Left lung (tissue), 14 donors: ENCODE measurements at regions of chr17 and their contacts with region 1.

Region 1: DNA sequence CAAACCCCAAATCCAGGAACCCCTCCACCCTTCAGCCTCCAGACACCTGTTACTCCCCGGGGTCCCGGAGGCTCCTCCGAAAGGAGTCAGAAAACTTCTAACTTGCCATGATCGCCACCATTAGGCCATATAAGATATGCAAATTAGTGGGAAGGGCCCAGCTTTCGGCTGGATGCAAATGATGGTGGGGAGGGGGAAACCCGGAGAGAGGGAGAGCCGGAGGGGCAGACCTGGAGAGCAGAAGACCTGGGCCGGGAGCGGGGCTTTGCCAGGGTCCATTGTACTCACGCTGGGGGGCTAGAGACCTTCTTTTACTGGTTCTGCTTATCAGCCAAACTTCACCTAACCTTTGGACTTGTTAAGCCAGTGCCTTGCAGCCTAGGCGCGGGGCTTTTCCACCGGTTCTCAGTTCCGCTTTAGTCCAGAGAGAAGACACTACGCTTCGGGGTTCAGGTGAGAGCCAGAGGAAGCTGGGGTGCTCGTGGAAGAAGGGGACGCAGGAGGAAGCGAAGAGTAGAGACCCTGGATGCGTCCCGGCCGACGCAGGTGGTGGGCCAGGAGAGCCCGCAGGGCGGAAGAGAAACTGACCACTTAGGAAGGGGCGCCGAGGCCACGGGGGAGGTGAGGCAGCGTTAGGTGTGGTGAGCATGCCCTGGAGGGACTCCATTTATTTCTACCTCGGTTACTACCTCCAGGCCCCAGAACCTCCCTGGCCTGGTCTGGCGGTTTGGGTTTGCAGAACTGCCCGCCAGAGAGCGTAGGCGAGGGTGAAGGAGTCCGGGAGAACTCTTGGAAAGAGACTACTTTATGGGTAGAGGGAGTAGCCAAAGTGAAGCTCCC is at the start of gene HNF1B:
- DNase-seq: peak in 3 of 4 donors; percentile 66 to 75 (median 70)
- ATAC-seq: peak; percentile 81
- H3K4me3 ChIP-seq: peak within 1 kb of the TSS; percentile 30 to 33
- H3K27ac ChIP-seq: peak within 1 kb of the TSS; percentile 68 to 76
- H3K4me1 ChIP-seq: peaks cover 4 to 42% of the 10 kb centered on the region in 2 donors
- H3K27me3 ChIP-seq: peaks cover 61 to 98% of the 10 kb centered on the region in 2 donors
- CTCF ChIP-seq: no peak
- polyA plus RNA-seq, gene HNF1B: 31.0 to 40.6 (median 36.2) TPM

Region 2: GRCh38 chr17:37592291-37592690 is 152.9 kb before region 1 on chr17:
- intact Hi-C with region 1: no loop called
- DNase-seq: no peak
- ATAC-seq: no peak
- H3K4me3 ChIP-seq: no peak overlapping the region
- H3K27ac ChIP-seq: no peak overlapping the region
- H3K4me1 ChIP-seq: peaks cover 0 to 6% of the 10 kb centered on the region in 2 donors
- H3K27me3 ChIP-seq: no peaks in the 10 kb centered on the region
- CTCF ChIP-seq: no peak

Region 3: GRCh38 chr17:37701496-37701898 is 43.7 kb before region 1 on chr17:
- intact Hi-C with region 1: no loop called
- DNase-seq: no peak
- ATAC-seq: peak; percentile 89
- H3K4me3 ChIP-seq: no peak overlapping the region
- H3K27ac ChIP-seq: no peak overlapping the region
- H3K4me1 ChIP-seq: no peaks in the 10 kb centered on the region
- H3K27me3 ChIP-seq: peaks cover 0 to 16% of the 10 kb centered on the region in 2 donors
- CTCF ChIP-seq: peak; percentile 39 to 68

Region 4: GRCh38 chr17:37725601-37726146 is 19.5 kb before region 1 on chr17:
- intact Hi-C with region 1: loop called in 1 of 2 experiments (anchors 2 kb)
- DNase-seq: no peak
- ATAC-seq: peak; percentile 72
- H3K4me3 ChIP-seq: no peak overlapping the region
- H3K27ac ChIP-seq: peak overlapping the region in 1 of 2 donors; percentile 33
- H3K4me1 ChIP-seq: no peaks in the 10 kb centered on the region
- H3K27me3 ChIP-seq: peaks cover 0 to 10% of the 10 kb centered on the region in 2 donors
- CTCF ChIP-seq: no peak

Region 5: DNA sequence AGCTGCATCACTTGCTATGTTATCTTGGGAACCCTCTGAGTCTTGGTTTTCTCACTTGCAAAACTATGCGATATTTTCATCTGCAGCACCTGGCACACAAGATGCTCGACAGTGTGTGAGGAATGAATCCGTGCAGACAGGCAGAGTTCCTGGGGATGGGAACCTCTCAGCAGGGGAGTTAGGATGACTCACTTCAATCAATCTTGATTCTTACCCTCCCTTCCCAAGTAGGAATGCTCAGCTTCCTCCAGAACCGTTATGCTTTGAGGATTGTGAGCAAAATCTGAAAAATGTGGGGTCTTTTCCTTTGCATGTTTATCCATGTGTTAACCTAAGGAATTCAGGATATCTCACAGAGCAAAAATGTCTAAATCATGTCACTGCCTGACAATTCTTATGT is 68.6 kb after region 1 on chr17:
- intact Hi-C with region 1: no loop called
- DNase-seq: no peak
- ATAC-seq: no peak
- H3K4me3 ChIP-seq: no peak overlapping the region
- H3K27ac ChIP-seq: no peak overlapping the region
- H3K4me1 ChIP-seq: no peaks in the 10 kb centered on the region
- H3K27me3 ChIP-seq: peaks cover 0 to 26% of the 10 kb centered on the region in 2 donors
- CTCF ChIP-seq: no peak

Region 6: GRCh38 chr17:37824534-37825485 is 79.6 kb after region 1 on chr17:
- intact Hi-C with region 1: no loop called
- DNase-seq: no peak
- ATAC-seq: peak; percentile 26
- H3K4me3 ChIP-seq: no peak overlapping the region
- H3K27ac ChIP-seq: no peak overlapping the region
- H3K4me1 ChIP-seq: peaks cover 0 to 28% of the 10 kb centered on the region in 2 donors
- H3K27me3 ChIP-seq: no peaks in the 10 kb centered on the region
- CTCF ChIP-seq: no peak